ENCODE measurements at regions of chr15 and their contacts with region 1.

Region 1: DNA sequence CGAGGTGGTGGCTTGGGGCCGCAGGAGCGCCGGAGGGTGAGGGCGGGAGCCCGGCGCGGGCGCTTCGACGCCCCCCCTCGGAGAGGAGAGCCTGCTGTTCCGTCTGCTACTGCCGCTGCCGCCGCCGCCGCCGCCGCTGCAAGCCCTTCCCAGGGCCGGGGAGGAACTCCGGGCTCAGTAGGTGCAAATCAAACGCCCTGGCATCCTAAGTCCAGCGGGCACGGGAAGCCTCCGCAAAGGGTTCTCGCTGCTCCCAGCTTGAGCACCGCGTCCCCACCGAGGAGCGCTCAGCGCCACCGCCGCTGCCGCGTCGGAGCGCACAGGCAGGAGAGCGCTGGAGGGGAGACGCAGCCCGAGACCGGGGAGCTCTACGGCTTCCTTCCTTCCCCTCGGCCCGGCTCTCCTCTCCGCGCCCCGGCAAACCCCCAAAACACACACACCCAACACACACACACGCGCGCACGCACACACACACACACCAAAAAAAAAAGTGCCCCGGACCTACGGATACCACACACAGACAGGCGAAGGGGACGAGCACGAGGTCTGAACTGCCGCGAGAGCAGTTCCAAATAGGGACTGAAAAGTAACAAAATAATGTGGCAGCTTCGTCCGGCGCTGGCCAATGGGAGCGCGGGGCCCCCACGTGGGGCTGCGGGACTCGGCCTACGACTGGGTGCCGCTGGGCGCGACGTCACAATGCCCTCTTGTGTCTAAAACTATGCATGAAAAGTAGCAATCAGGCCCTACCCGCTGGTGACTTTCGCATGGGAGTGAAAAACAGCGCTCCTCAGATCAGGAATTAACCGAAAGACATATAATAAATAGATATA is at the start of gene TLE3:
- DNase-seq: peak; percentile 99
- H3K4me3 ChIP-seq: peak within 1 kb of the TSS; percentile 82
- H3K27ac ChIP-seq: peak within 1 kb of the TSS; percentile 71
- H3K4me1 ChIP-seq: peaks cover 68% of the 10 kb centered on the region
- CTCF ChIP-seq: peak; percentile 71
- total RNA-seq, gene TLE3: 19.7 and 37.9 TPM in 2 replicates

Region 2: GRCh38 chr15:69475769-69476358 is 621.7 kb before region 1 on chr15:
- CTCF ChIA-PET with region 1: no interaction called
- POLR2A ChIA-PET with region 1: no interaction called
- intact Hi-C with region 1: loop called (anchors 5 kb)
- DNase-seq: peak; percentile 56
- H3K4me3 ChIP-seq: no peak overlapping the region
- H3K27ac ChIP-seq: no peak overlapping the region
- H3K4me1 ChIP-seq: no peaks in the 10 kb centered on the region
- CTCF ChIP-seq: peak; percentile 87

Region 3: GRCh38 chr15:69881766-69882165 is 215.8 kb before region 1 on chr15:
- CTCF ChIA-PET with region 1: no interaction called
- POLR2A ChIA-PET with region 1: no interaction called
- intact Hi-C with region 1: loop called (anchors 1 kb)
- DNase-seq: peak; percentile 99
- H3K4me3 ChIP-seq: peak overlapping the region; percentile 62
- H3K27ac ChIP-seq: peak overlapping the region; percentile 91
- H3K4me1 ChIP-seq: peaks cover 59% of the 10 kb centered on the region
- CTCF ChIP-seq: no peak; the same call in 1 of the 2 replicates

Region 4: DNA sequence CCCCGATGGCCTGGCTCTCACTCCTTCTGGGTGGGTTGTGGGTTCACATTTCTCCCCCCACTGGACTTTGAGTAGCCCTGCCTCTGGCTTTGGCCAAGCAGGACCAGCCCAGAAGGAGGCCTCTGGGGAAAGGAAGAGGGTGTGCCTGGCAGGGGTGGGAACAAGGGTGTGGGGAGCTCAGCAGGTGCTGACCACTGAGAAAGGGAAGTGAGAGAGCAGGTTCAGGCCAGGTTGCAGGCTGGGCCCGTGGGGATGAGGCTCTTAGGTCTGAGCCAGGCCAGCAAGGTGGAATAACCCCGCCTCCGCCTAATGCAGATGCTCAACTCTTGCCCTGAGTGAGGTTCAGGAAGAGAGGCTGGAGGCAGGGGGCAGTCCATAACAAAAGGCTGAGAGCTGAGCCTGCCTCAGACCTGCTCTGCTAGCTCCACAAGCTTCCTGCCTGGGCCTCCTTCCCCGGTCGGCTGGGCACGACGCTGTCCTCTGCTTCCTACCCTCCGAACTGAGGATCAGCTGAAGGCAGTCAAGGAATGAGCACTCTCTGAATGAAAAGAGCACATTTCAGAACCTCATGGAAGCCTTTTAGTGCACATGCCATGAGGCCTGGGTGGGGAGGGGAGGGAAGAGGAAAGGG is 82.6 kb before region 1 on chr15:
- CTCF ChIA-PET with region 1: no interaction called
- POLR2A ChIA-PET with region 1: interaction called, 5 read pairs
- intact Hi-C with region 1: loop called (anchors 1 kb)
- DNase-seq: peak; percentile 93
- H3K4me3 ChIP-seq: peak overlapping the region; percentile 28
- H3K27ac ChIP-seq: peak overlapping the region; percentile 81
- H3K4me1 ChIP-seq: peaks cover 83% of the 10 kb centered on the region
- CTCF ChIP-seq: no peak; the same call in 1 of the 2 replicates

Region 5: DNA sequence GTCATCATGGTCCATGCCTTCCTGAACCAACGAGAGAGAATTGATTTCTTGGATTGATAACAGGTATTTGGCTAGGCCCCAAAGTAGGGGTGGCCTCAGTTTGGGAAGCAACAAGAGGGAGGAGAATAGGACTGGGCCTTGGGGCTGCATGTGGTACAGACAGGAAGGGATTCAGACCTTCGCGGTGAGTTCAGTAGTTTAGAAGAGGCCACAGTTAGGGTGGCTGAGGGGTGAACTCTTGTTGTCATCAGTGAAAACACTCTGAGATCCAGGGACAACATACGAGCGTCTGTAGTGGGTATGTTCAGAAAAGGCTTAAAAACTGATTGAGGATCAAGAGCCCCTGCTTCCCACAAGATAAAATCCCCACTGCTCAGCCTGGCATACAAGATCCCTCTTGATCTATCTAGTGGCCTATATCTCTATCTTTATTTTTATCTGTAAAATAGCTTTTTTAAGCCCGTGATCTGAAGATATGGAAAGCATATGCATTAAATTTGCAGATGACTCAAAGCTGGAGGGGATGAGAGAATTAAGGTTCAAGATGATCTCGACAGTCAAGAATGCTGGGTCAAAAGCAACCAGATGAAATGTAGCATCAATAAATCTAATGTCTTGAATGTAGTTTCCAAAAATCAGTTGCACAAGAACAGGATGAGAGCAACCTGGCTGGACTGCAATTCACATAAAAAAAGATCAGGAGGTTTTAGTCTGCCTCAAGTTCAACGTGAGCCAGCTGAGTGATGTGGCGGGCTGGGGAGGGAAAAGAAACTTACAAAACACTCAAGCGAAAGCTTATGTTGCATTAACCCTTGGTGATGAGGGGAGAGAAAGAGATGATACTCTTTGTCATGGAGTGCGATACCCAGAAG is 221.3 kb after region 1 on chr15:
- CTCF ChIA-PET with region 1: no interaction called
- POLR2A ChIA-PET with region 1: no interaction called
- intact Hi-C with region 1: loop called (anchors 1 kb)
- DNase-seq: no peak
- H3K4me3 ChIP-seq: peak overlapping the region; percentile 33
- H3K27ac ChIP-seq: peak overlapping the region; percentile 81
- H3K4me1 ChIP-seq: peaks cover 53% of the 10 kb centered on the region
- CTCF ChIP-seq: 0 out of 2 replicates have a peak, but pooled peaks have one; percentile 11